ENCODE measurements at regions of chr11 and their contacts with region 1.

Region 1: DNA sequence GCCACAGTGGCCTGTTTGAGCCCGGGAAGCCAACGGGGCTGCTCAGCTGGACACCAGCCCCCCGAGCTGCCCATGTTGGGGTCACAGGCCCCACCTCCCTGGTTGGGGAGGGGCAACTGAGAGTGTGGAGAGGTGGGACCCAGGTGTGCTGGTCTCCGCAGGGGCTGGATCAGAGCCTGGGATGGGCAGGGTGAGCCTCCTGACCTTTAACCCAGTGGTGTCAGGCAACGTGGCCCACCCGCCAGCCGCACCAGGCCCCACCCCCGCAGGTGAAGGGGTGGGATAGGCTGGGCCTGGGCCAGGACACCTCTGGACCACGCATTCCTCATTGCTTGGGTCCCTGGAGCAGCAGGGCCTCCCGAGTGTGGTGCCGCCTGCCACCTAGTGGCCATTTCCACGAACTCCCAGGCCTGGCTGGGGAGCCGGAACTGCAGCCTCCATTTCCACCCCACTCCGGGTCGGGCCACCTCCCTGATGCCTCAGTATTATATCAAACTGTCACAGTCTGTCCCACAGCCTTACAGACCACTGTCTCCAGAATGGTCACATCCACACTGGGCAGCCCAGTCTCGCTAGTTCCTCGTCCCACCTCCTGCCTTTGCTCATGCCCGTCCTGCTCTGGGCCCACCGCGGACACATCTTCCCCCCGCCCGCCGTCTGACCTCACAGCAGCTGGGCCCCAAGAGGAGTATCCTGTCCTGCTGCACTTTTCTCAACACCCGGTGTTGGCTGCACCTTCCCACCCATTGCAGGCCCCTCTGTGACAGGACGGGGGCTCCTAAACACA is 13.3 kb upstream of the PPP6R3 start:
- DNase-seq: peak; percentile 55 to 79 (median 69)
- ATAC-seq: peak; percentile 97
- H3K4me3 ChIP-seq: no peak overlapping the region
- H3K4me3 Mint-ChIP-seq: no peak overlapping the region
- H3K27ac ChIP-seq: no peak overlapping the region
- H3K27ac Mint-ChIP-seq: peak overlapping the region in 2 of 9 donors; percentile 21 to 22
- H3K4me1 ChIP-seq: peaks cover 0 to 3% of the 10 kb centered on the region in 2 donors
- H3K4me1 Mint-ChIP-seq: peaks cover 0 to 7% (median 4%) of the 10 kb centered on the region in 7 donors
- H3K27me3 ChIP-seq: no peaks in the 10 kb centered on the region
- H3K27me3 Mint-ChIP-seq: no peaks in the 10 kb centered on the region

Region 2: DNA sequence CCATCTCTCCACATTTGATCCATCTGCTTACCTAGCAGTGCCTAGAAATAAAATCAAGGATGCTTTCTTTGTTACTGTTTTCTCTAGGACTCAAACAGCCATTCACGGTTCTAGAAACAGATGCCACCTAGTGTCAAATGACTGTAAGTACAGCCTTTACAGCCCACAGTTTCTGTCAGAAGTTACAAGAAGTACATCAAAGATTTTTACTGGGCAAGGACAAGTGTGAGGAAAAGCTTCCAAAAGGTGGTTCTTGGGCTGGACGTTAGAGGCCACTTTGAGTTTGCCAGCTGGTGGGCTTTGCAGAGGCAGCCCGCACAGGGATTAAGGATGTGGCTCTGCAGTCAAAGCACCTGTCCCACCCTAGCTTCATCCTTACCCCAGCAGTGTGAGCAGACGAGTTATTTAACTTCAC is 241.0 kb before region 1 on chr11:
- CTCF ChIA-PET with region 1: no interaction called
- POLR2A ChIA-PET with region 1: no interaction called
- intact Hi-C with region 1: loop called (anchors 5 kb)
- DNase-seq: peak in 7 of 9 donors; percentile 35 to 65 (median 55)
- ATAC-seq: peak; percentile 82
- H3K4me3 ChIP-seq: no peak overlapping the region
- H3K4me3 Mint-ChIP-seq: peak overlapping the region in 7 of 10 donors; percentile 5 to 60 (median 25)
- H3K27ac ChIP-seq: no peak overlapping the region
- H3K27ac Mint-ChIP-seq: peak overlapping the region in 5 of 9 donors; percentile 7 to 73 (median 43)
- H3K4me1 ChIP-seq: peaks cover 23 to 48% of the 10 kb centered on the region in 2 donors
- H3K4me1 Mint-ChIP-seq: peaks cover 38 to 91% (median 71%) of the 10 kb centered on the region in 7 donors
- H3K27me3 ChIP-seq: no peaks in the 10 kb centered on the region
- H3K27me3 Mint-ChIP-seq: no peaks in the 10 kb centered on the region

Region 3: DNA sequence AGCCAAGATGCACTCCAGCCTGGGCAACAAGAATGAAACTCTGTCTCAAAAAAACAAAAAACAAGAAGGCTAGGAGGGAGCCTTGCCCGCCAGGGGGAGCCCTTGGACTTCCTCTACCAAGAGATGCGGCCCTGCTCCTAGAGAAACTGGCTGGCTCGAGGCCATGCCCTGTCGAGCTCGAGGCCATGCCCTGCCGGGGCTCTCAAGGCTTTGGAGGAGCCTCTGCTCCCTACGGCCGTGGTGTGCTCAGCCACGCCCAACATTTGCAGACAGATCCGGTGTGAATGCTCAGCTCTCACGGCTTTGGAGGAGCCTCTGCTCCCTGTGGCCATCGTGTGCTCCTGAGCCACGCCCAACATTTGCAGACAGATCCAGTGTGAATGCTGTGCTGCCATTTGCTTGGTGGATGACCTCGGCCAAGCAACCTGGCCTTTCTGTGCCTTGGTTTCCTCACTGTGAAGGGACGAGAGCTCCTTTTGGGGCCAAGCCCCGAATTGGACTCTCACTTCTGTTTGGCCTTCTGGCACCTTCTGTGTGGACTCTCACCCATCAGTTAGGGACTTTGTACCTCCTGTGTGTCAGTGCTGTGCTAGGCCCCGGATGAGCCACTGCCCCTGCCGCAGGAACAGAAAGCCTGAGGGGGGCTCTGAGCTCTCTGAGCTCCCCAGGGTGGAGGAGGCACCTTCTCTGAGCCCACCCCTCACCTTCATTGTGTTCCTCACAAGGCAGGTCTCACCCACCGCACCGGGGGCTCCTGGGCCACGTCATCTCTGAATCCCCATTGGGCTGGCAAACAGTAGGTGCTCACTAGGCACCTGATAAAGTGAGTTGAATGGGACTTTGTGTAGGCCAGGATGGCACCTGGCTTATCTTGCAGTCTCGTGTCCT is 189.5 kb before region 1 on chr11:
- CTCF ChIA-PET with region 1: no interaction called
- POLR2A ChIA-PET with region 1: no interaction called
- intact Hi-C with region 1: loop called (anchors 1 kb)
- DNase-seq: peak; percentile 84 to 95 (median 89)
- ATAC-seq: peak; percentile 95
- H3K4me3 ChIP-seq: no peak overlapping the region
- H3K4me3 Mint-ChIP-seq: peak overlapping the region in 1 of 10 donors; percentile 34
- H3K27ac ChIP-seq: no peak overlapping the region
- H3K27ac Mint-ChIP-seq: peak overlapping the region in 3 of 9 donors; percentile 21 to 85 (median 54)
- H3K4me1 ChIP-seq: peaks cover 3 to 5% of the 10 kb centered on the region in 2 donors
- H3K4me1 Mint-ChIP-seq: peaks cover 2 to 6% (median 4%) of the 10 kb centered on the region in 7 donors
- H3K27me3 ChIP-seq: no peaks in the 10 kb centered on the region
- H3K27me3 Mint-ChIP-seq: peaks cover 0 to 2% (median 0%) of the 10 kb centered on the region in 5 donors

Region 4: DNA sequence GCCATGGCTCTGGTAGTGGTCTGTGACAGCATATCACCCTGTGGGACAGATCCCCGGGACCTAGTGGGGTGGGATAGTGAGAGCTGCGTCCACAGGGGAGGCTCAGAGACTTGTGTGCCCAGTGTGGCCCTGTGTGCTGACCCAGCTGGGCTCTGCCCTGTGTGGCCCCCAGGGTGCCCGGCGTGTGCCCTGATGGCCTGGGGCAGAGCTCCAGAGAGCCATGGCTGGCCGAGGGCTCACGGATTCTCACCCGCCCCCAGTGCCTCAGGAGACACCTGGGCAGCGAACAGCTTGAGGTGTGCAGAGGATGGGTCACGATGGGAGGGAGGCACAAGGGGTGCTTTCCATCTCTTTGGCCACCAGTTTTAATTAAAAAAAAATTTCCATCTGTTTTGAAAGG is 123.0 kb before region 1 on chr11:
- CTCF ChIA-PET with region 1: no interaction called
- POLR2A ChIA-PET with region 1: no interaction called
- intact Hi-C with region 1: no loop called
- DNase-seq: no peak
- ATAC-seq: no peak
- H3K4me3 ChIP-seq: no peak overlapping the region
- H3K4me3 Mint-ChIP-seq: no peak overlapping the region
- H3K27ac ChIP-seq: no peak overlapping the region
- H3K27ac Mint-ChIP-seq: no peak overlapping the region
- H3K4me1 ChIP-seq: peaks cover 6 to 27% of the 10 kb centered on the region in 2 donors
- H3K4me1 Mint-ChIP-seq: peaks cover 6 to 25% (median 21%) of the 10 kb centered on the region in 7 donors
- H3K27me3 ChIP-seq: no peaks in the 10 kb centered on the region
- H3K27me3 Mint-ChIP-seq: peaks cover 0 to 14% (median 0%) of the 10 kb centered on the region in 5 donors

Region 5: DNA sequence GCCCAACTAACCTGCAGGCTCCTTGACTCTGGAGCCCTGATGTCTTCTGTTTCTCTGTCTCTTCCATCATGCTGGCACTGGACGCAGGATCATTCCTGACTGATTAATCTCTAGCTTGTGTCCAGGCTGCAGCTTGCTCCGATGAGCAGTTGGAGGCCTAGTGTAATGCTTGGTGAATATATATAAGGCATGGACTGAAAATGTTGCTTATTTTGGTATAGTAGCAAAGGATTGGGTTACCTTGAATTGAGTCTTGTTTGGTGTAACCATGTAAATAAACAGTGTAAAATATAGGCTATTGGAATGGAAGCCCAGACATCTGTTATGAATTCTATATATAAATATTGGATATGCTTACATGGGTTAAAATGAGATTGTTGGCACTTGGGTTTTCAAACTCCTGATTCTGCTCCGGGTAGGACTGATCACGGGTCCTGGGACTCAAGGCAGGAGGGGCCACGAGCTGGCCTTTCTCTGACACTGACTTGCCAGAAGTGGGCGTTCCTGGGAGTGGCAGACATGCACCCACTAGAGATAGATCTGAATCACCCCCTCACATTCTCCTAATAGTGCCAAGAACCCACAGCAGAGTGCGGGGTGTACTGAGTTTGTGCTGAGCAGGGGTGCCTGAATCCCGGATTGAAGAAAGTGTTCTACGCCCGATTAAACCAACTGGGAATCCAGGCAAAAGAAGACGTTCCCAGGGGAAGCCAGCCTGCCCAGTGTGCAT is 109.0 kb before region 1 on chr11:
- CTCF ChIA-PET with region 1: no interaction called
- POLR2A ChIA-PET with region 1: no interaction called
- intact Hi-C with region 1: loop called in 1 of 2 experiments (anchors 10 kb)
- DNase-seq: no peak
- ATAC-seq: no peak
- H3K4me3 ChIP-seq: no peak overlapping the region
- H3K4me3 Mint-ChIP-seq: peak overlapping the region in 6 of 10 donors; percentile 22 to 82 (median 40)
- H3K27ac ChIP-seq: no peak overlapping the region
- H3K27ac Mint-ChIP-seq: peak overlapping the region in 5 of 9 donors; percentile 17 to 83 (median 67)
- H3K4me1 ChIP-seq: peaks cover 19 to 35% of the 10 kb centered on the region in 2 donors
- H3K4me1 Mint-ChIP-seq: peaks cover 25 to 66% (median 50%) of the 10 kb centered on the region in 7 donors
- H3K27me3 ChIP-seq: no peaks in the 10 kb centered on the region
- H3K27me3 Mint-ChIP-seq: no peaks in the 10 kb centered on the region

Region 6: DNA sequence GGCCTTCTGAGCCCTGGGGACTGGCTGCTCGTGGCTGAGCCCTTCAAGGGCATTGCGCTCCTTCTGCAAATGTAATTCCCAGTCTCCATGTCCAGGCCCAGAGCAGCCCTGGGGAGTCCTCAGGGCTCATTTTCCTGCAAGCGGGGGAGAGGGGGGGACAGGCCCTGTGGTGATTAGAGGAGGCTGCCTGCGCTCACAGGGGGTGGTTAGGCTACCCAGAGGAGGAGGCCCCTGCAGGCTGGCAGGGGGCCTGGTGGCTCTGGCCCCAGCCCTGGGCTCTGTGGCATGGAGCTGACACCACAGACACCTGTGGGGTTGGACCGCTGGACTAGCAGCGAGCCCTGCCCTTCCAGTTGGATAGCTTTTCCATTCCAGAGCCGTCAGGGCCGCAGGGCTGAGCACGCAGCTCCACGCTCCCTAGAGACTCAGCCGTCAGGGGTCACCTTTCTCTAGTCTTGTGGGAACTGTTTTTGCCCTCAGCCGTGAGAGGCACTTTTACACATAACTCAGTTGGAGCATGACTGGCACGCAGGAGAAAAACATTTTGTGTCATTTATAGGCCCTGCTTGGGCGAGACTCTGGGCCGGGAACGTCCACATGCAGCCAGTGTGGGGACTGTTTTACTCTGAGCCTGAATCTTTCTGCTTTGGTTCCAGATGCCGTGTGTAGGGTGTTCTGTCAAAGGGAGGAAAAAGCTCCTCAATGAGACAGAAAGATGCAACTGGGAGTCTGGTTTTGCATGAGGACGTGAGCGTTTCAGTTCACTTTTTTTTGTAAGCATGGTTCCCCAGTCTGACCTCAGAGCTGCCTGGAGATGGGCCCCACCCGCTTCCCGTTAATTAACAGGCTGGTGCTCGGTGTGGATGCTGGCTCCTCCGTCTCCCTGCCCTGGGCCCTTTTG is 76.7 kb before region 1 on chr11:
- CTCF ChIA-PET with region 1: no interaction called
- POLR2A ChIA-PET with region 1: no interaction called
- intact Hi-C with region 1: no loop called
- DNase-seq: no peak
- ATAC-seq: peak; percentile 76
- H3K4me3 ChIP-seq: no peak overlapping the region
- H3K4me3 Mint-ChIP-seq: no peak overlapping the region
- H3K27ac ChIP-seq: no peak overlapping the region
- H3K27ac Mint-ChIP-seq: no peak overlapping the region
- H3K4me1 ChIP-seq: no peaks in the 10 kb centered on the region
- H3K4me1 Mint-ChIP-seq: peaks cover 0 to 15% (median 0%) of the 10 kb centered on the region in 7 donors
- H3K27me3 ChIP-seq: no peaks in the 10 kb centered on the region
- H3K27me3 Mint-ChIP-seq: peaks cover 0 to 4% (median 0%) of the 10 kb centered on the region in 5 donors

Region 7: GRCh38 chr11:68424981-68425865 is 22.0 kb before region 1 on chr11:
- CTCF ChIA-PET with region 1: no interaction called
- POLR2A ChIA-PET with region 1: no interaction called
- intact Hi-C with region 1: loop called in 1 of 2 experiments (anchors 1 kb)
- DNase-seq: no peak
- ATAC-seq: no peak
- H3K4me3 ChIP-seq: no peak overlapping the region
- H3K4me3 Mint-ChIP-seq: no peak overlapping the region
- H3K27ac ChIP-seq: no peak overlapping the region
- H3K27ac Mint-ChIP-seq: no peak overlapping the region
- H3K4me1 ChIP-seq: no peaks in the 10 kb centered on the region
- H3K4me1 Mint-ChIP-seq: no peaks in the 10 kb centered on the region
- H3K27me3 ChIP-seq: no peaks in the 10 kb centered on the region
- H3K27me3 Mint-ChIP-seq: no peaks in the 10 kb centered on the region